Activated CD4-positive, alpha-beta memory T cell treated with anti-CD3 and anti-CD28 coated beads, Interleukin-2, amount 10 ng/mL, durations not matched to agents 7 days and 5 days (primary cell): ENCODE measurements at regions of chr22 and their contacts with region 1.

Region 1: GRCh38 chr22:19730655-19731360 is 7.5 kb downstream of the GP1BB start:
- DNase-seq: peak; percentile 83
- H3K4me3 Mint-ChIP-seq: peak overlapping the region; percentile 60
- H3K27ac Mint-ChIP-seq: no peak overlapping the region
- H3K4me1 Mint-ChIP-seq: peaks cover 2% of the 10 kb centered on the region
- H3K27me3 Mint-ChIP-seq: peaks cover 5% of the 10 kb centered on the region

Region 2: DNA sequence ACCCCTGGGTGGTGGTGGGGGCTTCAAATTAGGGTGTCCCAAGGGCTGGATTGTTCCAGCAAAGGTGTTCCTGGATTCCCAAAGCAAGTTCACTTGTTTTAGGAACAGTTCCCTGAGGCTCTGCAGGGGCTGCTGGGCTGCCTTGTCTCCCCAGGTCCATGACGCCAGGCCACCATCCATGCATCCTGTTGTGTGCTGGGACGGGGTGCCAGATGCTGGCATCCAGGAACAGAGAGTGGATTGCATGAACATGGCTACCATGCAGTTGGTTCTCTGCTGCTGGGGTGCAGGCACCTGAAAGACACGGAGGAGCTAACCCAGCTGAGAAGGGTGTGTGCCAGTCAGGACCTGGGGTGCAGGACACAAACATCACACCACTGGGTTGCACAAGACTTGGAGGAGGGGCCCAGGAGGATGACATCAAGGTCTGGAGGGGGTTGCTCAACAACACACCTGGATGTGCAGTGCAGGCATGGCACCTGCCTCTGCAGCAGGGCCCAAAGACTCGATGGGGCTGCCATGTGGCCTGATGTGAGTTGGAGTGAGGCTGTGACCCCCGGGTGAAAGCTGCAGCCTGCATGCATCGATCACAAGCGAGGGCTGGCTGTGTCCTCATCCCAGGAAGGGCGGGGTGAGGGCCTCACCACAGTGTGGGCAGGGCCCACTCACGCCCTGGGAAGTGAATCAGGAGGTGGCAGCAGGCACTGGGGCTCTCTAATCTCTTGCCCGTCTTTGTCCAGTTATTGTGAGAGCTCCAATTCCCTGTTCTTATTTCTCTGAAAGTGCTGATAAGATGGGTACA is 132.6 kb before region 1 on chr22:
- CTCF ChIA-PET with region 1: no interaction called
- POLR2A ChIA-PET with region 1: no interaction called
- DNase-seq: peak; percentile 38
- H3K4me3 Mint-ChIP-seq: peak overlapping the region; percentile 30
- H3K27ac Mint-ChIP-seq: peak overlapping the region; percentile 78
- H3K4me1 Mint-ChIP-seq: peaks cover 38% of the 10 kb centered on the region
- H3K27me3 Mint-ChIP-seq: peaks cover 3% of the 10 kb centered on the region

Region 3: DNA sequence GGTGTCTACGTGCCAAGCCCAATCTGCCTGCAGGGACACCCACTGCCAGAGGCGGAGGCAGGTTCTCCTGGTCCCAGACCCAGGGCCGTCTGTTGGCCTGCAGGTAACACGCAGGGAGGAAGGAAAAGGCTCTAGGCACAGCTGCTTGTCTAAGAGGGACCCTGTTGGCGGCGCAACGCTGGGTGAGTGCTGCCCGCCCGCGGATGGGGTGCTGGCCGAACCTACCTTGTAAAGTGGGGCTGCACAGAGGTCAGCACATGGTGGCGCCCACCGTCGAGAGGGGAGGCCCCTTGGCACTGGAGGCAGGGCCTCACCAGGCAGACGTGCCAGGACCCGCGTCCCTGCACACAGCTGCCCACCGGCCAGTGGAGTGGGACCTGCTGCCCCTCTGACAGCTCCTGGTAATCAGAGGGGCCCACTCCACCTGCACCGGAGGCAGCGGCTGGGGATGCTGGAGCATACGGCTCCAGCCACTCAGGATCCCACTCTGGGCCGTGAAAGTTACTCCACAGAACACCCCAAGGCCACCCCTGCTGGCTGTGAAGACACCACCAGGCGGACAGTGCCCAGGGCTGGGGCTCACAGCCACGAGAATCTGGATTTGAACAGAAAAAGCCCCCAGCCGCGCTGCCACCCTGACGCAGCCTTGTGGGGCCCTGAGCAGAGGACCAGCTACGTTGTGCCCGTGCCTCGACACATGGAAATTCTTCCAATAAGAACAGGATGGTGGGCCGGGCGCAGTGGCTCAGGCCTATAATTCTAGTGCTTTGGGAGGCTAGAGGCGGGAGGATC is 53.8 kb after region 1 on chr22:
- CTCF ChIA-PET with region 1: no interaction called
- POLR2A ChIA-PET with region 1: no interaction called
- DNase-seq: no peak
- H3K4me3 Mint-ChIP-seq: no peak overlapping the region
- H3K27ac Mint-ChIP-seq: no peak overlapping the region
- H3K4me1 Mint-ChIP-seq: no peaks in the 10 kb centered on the region
- H3K27me3 Mint-ChIP-seq: peaks cover 9% of the 10 kb centered on the region

Region 4: DNA sequence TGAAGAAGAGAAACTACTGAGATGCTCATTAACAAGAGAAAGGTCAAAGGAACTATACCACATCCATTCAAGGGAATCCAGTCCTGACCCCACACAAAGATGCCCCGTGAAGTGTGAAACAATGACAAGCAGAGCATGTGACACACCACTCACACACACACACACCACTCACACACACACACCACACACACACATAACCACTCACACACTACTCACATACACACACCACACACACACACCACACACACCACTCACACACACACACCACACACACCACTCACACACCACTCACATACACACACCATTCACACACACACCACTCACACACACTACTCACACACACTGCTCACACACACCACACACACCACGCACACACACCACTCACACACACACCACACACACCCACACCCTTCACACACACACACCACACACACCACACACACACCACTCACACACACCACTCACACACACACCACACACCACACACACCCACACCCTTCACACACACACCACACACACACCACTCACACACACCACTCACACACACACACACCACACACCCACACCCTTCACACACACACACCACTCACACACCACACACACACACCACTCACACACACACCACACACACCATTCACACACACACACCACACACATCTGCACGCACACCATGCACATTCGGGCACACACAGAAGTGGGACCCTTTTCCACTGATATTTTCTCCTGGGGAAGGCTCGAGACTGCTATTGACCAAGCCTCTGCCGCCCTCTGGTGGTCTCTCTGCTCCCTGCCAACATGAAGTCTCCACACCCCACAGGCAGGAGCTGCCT is 178.8 kb after region 1 on chr22:
- CTCF ChIA-PET with region 1: interaction called, 70 read pairs
- POLR2A ChIA-PET with region 1: interaction called, 12 read pairs
- DNase-seq: peak; percentile 86
- H3K4me3 Mint-ChIP-seq: no peak overlapping the region
- H3K27ac Mint-ChIP-seq: peak overlapping the region; percentile 21
- H3K4me1 Mint-ChIP-seq: peaks cover 2% of the 10 kb centered on the region
- H3K27me3 Mint-ChIP-seq: no peaks in the 10 kb centered on the region

Region 5: DNA sequence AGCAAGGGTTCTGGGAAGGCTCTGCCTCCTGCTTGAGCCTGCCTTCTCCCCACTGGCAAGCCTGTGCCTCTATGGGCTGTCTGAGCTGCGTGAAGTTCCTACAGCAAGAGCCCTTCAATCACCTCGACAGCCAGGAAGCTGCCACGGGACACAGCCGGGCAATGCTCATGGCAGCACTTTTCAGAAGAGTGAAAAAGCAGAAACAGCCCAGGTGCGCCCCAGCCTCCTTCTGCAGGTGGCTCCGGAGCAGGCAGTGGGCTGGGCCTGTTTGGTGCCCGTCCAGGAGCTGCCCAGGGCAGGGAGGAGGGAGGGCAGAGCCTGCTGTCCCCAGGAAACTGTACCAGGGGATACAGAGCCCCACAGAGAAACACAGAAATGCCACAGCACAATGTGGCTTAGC is 186.1 kb after region 1 on chr22:
- CTCF ChIA-PET with region 1: interaction called, 70 read pairs
- POLR2A ChIA-PET with region 1: interaction called, 12 read pairs
- DNase-seq: no peak
- H3K4me3 Mint-ChIP-seq: no peak overlapping the region
- H3K27ac Mint-ChIP-seq: no peak overlapping the region
- H3K4me1 Mint-ChIP-seq: no peaks in the 10 kb centered on the region
- H3K27me3 Mint-ChIP-seq: no peaks in the 10 kb centered on the region

Region 6: GRCh38 chr22:19948057-19948760 is 217.4 kb after region 1 on chr22:
- CTCF ChIA-PET with region 1: interaction called, 18 read pairs
- POLR2A ChIA-PET with region 1: no interaction called
- DNase-seq: no peak
- H3K4me3 Mint-ChIP-seq: no peak overlapping the region
- H3K27ac Mint-ChIP-seq: no peak overlapping the region
- H3K4me1 Mint-ChIP-seq: peaks cover 19% of the 10 kb centered on the region
- H3K27me3 Mint-ChIP-seq: no peaks in the 10 kb centered on the region